ENCODE measurements at regions of chr11 and their contacts with region 1.

Region 1: GRCh38 chr11:38543311-38543710 is 1945.3 kb upstream of the RAG2 start:
- DNase-seq: no peak
- H3K4me3 ChIP-seq: no peak overlapping the region
- H3K27ac ChIP-seq: no peak overlapping the region
- H3K4me1 ChIP-seq: no peaks in the 10 kb centered on the region; the same call in 1 of the 2 replicates
- H3K27me3 ChIP-seq: no peaks in the 10 kb centered on the region
- CTCF ChIP-seq: no peak

Region 2: GRCh38 chr11:38562562-38562961 is 19.3 kb after region 1 on chr11:
- CTCF ChIA-PET with region 1: no interaction called
- POLR2A ChIA-PET with region 1: no interaction called
- intact Hi-C with region 1: loop called (anchors 1 kb)
- DNase-seq: no peak
- H3K4me3 ChIP-seq: no peak overlapping the region
- H3K27ac ChIP-seq: no peak overlapping the region
- H3K4me1 ChIP-seq: no peaks in the 10 kb centered on the region
- H3K27me3 ChIP-seq: no peaks in the 10 kb centered on the region
- CTCF ChIP-seq: no peak

Measured in PC-9 (cell line).